CD8-positive, alpha-beta memory T cell (primary cell): ENCODE measurements at regions of chr5 and their contacts with region 1.

Region 1: GRCh38 chr5:54492178-54492577 is 25.4 kb upstream of the SNX18 start:
- DNase-seq: no peak
- H3K4me3 ChIP-seq: no peak overlapping the region
- H3K4me3 Mint-ChIP-seq: no peak overlapping the region
- H3K27ac ChIP-seq: no peak overlapping the region
- H3K27ac Mint-ChIP-seq: no peak overlapping the region
- H3K4me1 ChIP-seq: no peaks in the 10 kb centered on the region
- H3K4me1 Mint-ChIP-seq: peaks cover 0 to 3% (median 0%) of the 10 kb centered on the region in 3 donors
- H3K27me3 ChIP-seq: no peaks in the 10 kb centered on the region
- H3K27me3 Mint-ChIP-seq: peaks cover 14 to 24% of the 10 kb centered on the region in 2 donors

Region 2: GRCh38 chr5:54415896-54416601 is 76.1 kb before region 1 on chr5:
- CTCF ChIA-PET with region 1: interaction called, 11 read pairs
- POLR2A ChIA-PET with region 1: no interaction called
- DNase-seq: no peak
- H3K4me3 ChIP-seq: no peak overlapping the region
- H3K4me3 Mint-ChIP-seq: no peak overlapping the region
- H3K27ac ChIP-seq: no peak overlapping the region
- H3K27ac Mint-ChIP-seq: no peak overlapping the region
- H3K4me1 ChIP-seq: no peaks in the 10 kb centered on the region
- H3K4me1 Mint-ChIP-seq: no peaks in the 10 kb centered on the region
- H3K27me3 ChIP-seq: no peaks in the 10 kb centered on the region
- H3K27me3 Mint-ChIP-seq: peaks cover 2 to 16% of the 10 kb centered on the region in 2 donors

Region 3: GRCh38 chr5:54443270-54443669 is 48.9 kb before region 1 on chr5:
- CTCF ChIA-PET with region 1: interaction called, 10 read pairs
- POLR2A ChIA-PET with region 1: no interaction called
- DNase-seq: no peak
- H3K4me3 ChIP-seq: no peak overlapping the region
- H3K4me3 Mint-ChIP-seq: no peak overlapping the region
- H3K27ac ChIP-seq: no peak overlapping the region
- H3K27ac Mint-ChIP-seq: no peak overlapping the region
- H3K4me1 ChIP-seq: peaks cover 22% of the 10 kb centered on the region
- H3K4me1 Mint-ChIP-seq: peaks cover 4 to 8% (median 8%) of the 10 kb centered on the region in 3 donors
- H3K27me3 ChIP-seq: no peaks in the 10 kb centered on the region
- H3K27me3 Mint-ChIP-seq: peaks cover 0 to 49% of the 10 kb centered on the region in 2 donors

Region 4: DNA sequence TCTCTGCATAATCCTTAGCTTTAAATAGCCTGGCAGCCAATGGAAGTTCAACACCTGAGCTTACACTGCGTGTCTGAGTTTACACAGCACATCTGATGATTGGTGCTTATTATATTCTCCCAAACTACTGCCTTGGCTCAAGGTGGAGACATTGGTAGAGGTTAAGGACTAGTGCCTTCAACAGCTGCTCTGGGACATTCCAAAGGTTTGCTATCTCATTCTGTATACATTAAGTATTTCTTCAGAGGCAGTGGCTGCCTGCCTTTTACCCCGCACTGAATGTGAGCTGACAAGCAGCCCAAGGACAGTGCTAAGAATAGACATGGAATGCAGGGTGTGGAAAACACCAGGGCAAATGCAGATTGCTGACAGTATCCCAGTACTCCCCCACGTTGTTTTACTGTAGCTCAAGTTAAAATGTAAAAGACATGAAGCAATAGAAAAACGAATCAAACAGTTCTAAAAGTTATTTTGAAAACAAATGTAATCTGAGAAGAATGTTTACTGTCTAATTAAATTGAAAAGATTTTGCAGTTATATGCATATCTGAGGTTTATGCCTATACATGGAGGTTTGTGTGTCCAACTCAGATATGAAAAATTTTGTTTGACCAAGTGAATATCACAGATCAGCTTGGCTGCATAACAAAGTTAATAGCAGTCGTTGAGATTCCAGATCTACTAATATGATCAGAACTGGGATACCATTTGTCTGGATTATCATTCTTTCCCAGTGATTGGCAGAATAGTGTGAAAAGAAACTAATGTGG is 34.9 kb before region 1 on chr5:
- CTCF ChIA-PET with region 1: no interaction called
- POLR2A ChIA-PET with region 1: no interaction called
- DNase-seq: no peak
- H3K4me3 ChIP-seq: no peak overlapping the region
- H3K4me3 Mint-ChIP-seq: no peak overlapping the region
- H3K27ac ChIP-seq: no peak overlapping the region
- H3K27ac Mint-ChIP-seq: no peak overlapping the region
- H3K4me1 ChIP-seq: no peaks in the 10 kb centered on the region
- H3K4me1 Mint-ChIP-seq: no peaks in the 10 kb centered on the region
- H3K27me3 ChIP-seq: no peaks in the 10 kb centered on the region
- H3K27me3 Mint-ChIP-seq: peaks cover 11 to 48% of the 10 kb centered on the region in 2 donors

Region 5: GRCh38 chr5:54480296-54480695 is 11.9 kb before region 1 on chr5:
- CTCF ChIA-PET with region 1: interaction called, 12 read pairs
- POLR2A ChIA-PET with region 1: interaction called, 6 read pairs
- DNase-seq: no peak
- H3K4me3 ChIP-seq: no peak overlapping the region
- H3K4me3 Mint-ChIP-seq: no peak overlapping the region
- H3K27ac ChIP-seq: no peak overlapping the region
- H3K27ac Mint-ChIP-seq: no peak overlapping the region
- H3K4me1 ChIP-seq: no peaks in the 10 kb centered on the region
- H3K4me1 Mint-ChIP-seq: no peaks in the 10 kb centered on the region
- H3K27me3 ChIP-seq: no peaks in the 10 kb centered on the region
- H3K27me3 Mint-ChIP-seq: peaks cover 34 to 47% of the 10 kb centered on the region in 2 donors

Region 6: GRCh38 chr5:54867310-54867944 is 375.2 kb after region 1 on chr5:
- CTCF ChIA-PET with region 1: interaction called, 11 read pairs
- POLR2A ChIA-PET with region 1: no interaction called
- DNase-seq: peak in 2 of 5 donors; percentile 51 to 52
- H3K4me3 ChIP-seq: peak overlapping the region; percentile 10
- H3K4me3 Mint-ChIP-seq: peak overlapping the region in 6 of 7 donors; percentile 0 to 69 (median 40)
- H3K27ac ChIP-seq: no peak overlapping the region
- H3K27ac Mint-ChIP-seq: peak overlapping the region in 1 of 8 donors; percentile 4
- H3K4me1 ChIP-seq: peaks cover 6% of the 10 kb centered on the region
- H3K4me1 Mint-ChIP-seq: peaks cover 4 to 9% (median 6%) of the 10 kb centered on the region in 3 donors
- H3K27me3 ChIP-seq: no peaks in the 10 kb centered on the region
- H3K27me3 Mint-ChIP-seq: peaks cover 10 to 22% of the 10 kb centered on the region in 2 donors